ENCODE measurements at regions of chr4 and their contacts with region 1.

Region 1: GRCh38 chr4:41281038-41281634 is 24.4 kb downstream of the UCHL1 start:
- DNase-seq: no peak
- ATAC-seq: peak; percentile 95

Region 2: DNA sequence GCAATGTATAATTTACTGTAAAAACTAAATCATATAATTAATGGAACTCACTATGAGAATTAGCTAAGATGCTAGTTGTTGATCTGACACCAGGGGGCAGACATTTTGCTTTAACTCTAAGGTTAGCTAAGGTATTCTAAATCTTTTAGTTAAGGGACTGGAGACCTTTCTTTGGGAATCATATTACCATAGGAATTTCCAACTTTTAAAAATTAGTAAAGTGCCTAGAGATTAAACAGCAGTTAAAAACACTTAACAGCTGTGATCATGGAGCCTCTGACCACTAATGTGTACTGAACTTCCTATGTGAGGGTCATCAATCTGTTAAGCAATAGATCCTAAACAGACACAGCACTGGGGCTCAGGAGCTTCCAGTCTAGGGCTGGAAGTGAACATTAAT is 304.8 kb before region 1 on chr4:
- intact Hi-C with region 1: no loop called
- DNase-seq: no peak
- ATAC-seq: peak; percentile 66

Region 3: DNA sequence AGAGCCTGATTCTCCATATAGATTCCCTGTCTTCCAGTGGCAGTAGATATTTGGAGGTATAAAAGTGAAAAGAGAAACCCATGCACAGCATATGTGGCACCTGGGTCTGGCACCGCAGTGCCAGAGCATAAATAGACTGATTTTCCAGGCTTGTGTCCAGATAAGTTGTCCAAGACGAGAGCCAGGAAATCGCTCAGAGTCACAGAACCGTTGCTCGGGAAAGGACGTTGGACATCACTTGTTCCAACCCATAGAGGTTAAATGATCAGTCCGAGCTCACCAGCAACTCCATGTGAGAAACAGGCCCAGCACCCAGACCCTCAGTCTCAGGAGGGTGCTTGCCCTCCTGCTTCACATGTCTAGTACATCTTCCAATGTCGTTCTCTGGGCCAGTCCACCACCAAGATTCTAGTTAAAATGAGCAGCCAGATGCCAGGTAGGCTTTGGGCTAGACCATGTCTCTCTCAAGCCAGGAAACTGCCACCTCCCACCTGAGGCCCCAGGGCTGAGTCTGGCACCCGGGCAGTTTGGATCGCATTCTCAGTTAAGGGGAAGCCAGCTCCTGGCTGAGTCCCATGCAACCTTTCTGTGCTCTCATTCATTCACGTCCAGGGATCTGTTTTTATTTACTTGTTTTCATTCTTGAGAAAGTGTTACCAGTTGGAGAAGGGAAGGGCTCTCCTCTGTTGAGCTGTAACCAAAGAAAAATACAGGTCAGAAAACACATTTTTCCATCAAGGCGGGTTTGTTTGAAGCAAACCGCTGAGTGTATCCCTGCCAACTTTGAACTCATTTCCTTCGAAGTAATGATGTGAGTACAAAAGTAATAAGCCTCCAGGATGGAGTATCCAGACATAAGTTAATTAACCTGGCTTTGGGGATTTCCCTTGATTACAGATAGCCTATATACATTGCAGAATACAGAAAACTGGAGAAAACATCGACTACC is 375.7 kb after region 1 on chr4:
- intact Hi-C with region 1: loop called (anchors 10 kb)
- DNase-seq: no peak
- ATAC-seq: no peak

Region 4: GRCh38 chr4:41882625-41883347 is 601.6 kb after region 1 on chr4:
- intact Hi-C with region 1: loop called (anchors 10 kb)
- DNase-seq: no peak
- ATAC-seq: peak; percentile 84

Measured in sciatic nerve (tissue), 2 donors.